Activated T-helper 1 cell treated with anti-CD3 and anti-CD28 coated beads, Interleukin-12 subunit alpha, Interleukin-12 subunit beta, Interleukin-2, Interleukin-4 antibody, amounts not matched to agents 30 ng/mL and 10 ng/mL and 1 ng/mL, durations not matched to agents 14 hours and 24 hours and 36 hours (primary cell): ENCODE measurements at regions of chr10 and their contacts with region 1.

Region 1: DNA sequence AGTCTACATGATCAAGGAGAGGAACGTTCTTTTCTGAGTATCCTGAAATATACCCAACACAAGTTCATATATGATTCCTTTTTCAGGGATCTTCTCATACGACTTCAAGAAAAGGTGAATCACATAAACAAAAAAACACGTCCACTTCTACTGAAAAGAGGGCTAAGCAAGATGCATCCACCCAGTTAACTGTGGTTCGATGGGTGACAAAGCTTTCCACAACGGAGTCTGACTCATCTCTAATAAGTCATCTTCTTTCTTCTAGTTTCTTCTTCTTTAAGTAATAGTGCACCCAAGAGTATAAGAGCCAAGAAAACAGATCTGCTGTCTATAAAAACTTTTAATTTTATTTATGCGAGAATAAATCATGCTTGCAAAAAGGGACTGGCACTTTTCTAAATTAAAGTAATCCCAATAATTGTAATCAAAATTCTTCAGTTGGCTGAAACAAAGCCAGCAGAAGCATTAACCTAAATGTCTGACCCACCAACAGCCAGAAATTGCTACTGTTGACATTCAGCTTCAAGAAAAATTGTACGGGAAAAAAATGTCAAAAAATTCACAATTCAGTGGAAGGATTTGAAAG is 146.9 kb upstream of the ANK3 start:
- DNase-seq: no peak
- H3K4me3 Mint-ChIP-seq: peak overlapping the region; percentile 45
- H3K27ac Mint-ChIP-seq: peak overlapping the region; percentile 87
- H3K4me1 Mint-ChIP-seq: peaks cover 64% of the 10 kb centered on the region
- H3K27me3 Mint-ChIP-seq: no peaks in the 10 kb centered on the region

Region 2: DNA sequence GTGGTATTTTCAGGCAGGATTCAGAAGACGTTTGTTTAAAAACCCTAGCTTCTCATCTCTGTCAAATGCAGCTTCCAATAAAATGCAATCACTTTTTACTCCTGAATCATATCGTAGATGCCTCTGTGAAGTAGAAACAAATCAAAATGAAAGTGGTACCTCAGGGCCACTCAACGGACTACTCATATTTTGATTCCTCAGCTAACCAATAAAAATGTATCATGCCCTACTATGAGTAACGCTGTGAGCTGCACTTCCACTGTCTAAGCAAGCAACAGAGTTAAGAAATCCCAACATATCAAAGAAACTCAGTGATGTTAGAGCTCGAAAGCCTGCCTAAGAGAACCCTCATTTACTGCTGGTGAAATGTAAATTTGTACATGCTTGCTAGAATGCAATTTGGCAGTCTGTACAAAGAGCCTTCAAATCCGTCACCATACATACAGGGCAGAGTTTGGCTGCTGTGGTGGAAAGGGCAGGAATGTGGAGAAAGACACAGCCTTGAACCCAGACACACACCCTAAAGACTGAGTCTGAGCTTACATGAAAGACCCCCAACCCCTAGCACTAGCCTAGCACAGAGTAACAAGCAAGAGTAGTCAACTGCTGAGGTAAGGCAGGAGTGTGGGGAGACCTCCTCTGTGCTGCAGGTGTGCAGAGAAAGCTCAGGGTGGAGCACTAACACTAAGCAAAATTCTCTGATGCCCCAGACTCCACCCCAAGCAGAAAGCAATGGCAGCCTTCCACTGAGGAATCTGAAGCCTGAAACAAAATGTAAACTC is 298.5 kb before region 1 on chr10:
- intact Hi-C with region 1: loop called (anchors 1 kb)
- DNase-seq: no peak
- H3K4me3 Mint-ChIP-seq: peak overlapping the region; percentile 27
- H3K27ac Mint-ChIP-seq: peak overlapping the region; percentile 33
- H3K4me1 Mint-ChIP-seq: peaks cover 30% of the 10 kb centered on the region
- H3K27me3 Mint-ChIP-seq: no peaks in the 10 kb centered on the region

Region 3: GRCh38 chr10:60479305-60480020 is 57.2 kb before region 1 on chr10:
- intact Hi-C with region 1: loop called (anchors 5 kb)
- DNase-seq: no peak
- H3K4me3 Mint-ChIP-seq: no peak overlapping the region
- H3K27ac Mint-ChIP-seq: no peak overlapping the region
- H3K4me1 Mint-ChIP-seq: peaks cover 14% of the 10 kb centered on the region
- H3K27me3 Mint-ChIP-seq: no peaks in the 10 kb centered on the region

Region 4: DNA sequence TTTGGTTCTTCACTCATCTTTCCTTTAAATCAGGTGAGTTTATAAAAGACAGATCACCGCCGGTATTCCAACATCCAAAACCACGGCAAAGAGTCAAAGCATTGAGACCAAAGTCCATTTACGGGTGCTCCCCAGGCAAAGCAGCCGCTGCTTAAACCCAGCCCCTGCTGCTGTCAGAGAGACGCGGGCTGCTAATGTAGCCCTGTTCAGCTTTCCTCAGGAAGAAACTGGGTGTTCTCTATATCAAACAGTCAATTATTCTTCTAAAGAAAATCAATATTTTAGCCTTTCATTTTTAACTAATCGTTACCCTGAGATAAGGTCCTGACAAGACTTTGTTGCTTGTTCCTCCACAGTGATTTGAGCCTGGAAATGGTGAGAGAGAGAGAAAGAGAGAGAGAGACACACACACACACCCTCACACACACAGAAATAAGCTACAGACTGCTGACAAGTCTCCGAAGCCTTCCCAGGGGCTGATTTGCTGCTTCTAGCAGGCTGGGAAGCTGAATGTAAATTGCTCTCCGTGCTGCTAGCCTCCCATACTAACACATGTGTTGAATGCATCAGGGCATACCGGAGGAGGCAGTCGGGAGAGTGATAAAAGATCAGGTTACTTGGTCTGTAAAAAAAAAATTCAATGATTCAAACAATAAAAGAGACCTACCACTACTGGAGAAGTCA is 36.0 kb after region 1 on chr10:
- intact Hi-C with region 1: loop called (anchors 1 kb)
- DNase-seq: peak; percentile 21
- H3K4me3 Mint-ChIP-seq: peak overlapping the region; percentile 92
- H3K27ac Mint-ChIP-seq: peak overlapping the region; percentile 87
- H3K4me1 Mint-ChIP-seq: peaks cover 68% of the 10 kb centered on the region
- H3K27me3 Mint-ChIP-seq: no peaks in the 10 kb centered on the region

Region 5: DNA sequence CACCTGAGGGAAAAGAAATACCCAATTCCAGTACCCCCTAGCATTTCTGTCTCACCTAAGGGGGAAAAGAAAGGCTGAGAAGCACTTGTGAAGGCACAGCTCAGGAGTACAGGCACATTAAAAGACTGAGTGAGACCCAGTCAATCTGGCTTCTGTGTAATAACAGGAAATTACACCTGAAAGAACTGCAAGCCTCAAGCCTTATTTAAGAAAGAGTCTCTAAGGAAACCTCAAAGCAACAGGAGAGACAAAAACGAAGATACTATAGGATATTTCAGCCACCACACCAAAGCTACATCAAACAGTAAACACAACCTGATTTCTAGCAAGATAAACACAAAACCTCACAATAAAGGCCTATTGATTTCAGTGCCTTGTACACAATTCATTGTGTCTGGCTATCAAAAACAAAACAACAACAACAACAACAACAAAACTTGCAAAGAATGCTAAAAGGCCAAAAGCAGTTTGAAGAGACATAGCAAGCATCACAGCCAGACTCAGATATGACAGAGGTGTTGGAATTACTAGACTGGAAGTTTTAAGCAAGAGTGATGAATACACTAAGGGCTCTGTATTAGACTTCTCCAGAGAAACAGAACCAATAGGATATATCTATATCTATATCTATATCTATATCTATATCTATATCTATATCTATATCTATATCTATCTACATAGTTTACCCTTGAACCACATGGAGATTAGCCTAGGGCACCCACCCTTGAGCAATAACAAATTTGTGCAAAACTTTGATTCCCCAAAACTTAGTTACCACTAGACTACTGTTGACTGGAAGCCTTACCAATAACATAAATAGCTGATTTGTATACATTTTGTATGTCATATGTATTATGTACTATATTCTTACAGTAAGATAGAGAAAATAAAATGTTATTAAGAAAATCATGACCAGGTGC is 172.3 kb after region 1 on chr10:
- intact Hi-C with region 1: loop called (anchors 5 kb)
- DNase-seq: no peak
- H3K4me3 Mint-ChIP-seq: peak overlapping the region; percentile 69
- H3K27ac Mint-ChIP-seq: peak overlapping the region; percentile 95
- H3K4me1 Mint-ChIP-seq: peaks cover 71% of the 10 kb centered on the region
- H3K27me3 Mint-ChIP-seq: no peaks in the 10 kb centered on the region

Region 6: DNA sequence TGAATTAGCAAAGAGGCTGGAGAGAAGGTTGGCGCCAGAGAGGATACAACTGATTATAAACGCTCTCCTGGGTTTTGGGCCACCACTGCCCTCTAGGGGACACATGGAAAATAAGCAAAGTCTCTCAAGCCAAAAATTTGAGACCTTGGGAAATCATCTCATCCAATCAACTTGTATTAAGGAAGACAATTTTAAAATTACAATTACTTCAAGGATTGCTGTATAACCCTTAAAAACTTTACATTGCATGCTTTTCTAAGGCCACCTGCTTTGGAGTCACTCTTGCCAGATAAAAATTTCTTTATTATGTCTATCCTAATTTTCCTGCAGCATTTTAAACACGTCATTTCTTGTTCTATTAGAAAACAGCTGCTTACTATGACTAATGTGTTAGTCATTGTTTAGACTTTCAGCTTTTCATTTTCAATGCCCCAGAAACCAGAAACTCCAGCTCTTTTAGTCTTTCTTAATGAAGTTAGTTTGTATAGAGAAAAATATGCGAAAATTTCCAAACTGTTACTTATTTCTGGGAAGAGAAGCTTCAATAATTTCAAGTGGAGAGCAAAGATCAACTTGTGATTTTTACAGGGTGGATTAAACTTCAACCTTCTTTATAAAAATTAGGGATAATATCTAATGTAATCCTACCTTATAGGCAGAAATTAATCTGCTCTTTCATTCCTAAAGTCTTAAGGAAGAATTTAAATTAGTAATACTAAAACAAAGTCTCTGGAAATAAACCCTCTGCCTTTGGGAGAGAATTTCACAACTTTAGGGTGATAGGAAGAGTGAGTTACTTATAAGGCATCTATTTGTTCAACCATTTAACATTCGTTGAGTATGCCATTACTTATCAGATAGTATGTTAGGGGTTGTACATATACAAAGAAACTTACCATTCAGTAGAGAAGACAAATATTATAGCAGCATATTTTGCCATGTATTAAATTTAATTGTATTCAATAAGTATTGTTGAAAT is 427.9 kb after region 1 on chr10:
- intact Hi-C with region 1: loop called (anchors 10 kb)
- DNase-seq: peak; percentile 23
- H3K4me3 Mint-ChIP-seq: no peak overlapping the region
- H3K27ac Mint-ChIP-seq: no peak overlapping the region
- H3K4me1 Mint-ChIP-seq: peaks cover 34% of the 10 kb centered on the region
- H3K27me3 Mint-ChIP-seq: peaks cover 18% of the 10 kb centered on the region